Activated naive CD4-positive, alpha-beta T cell treated with anti-CD3 and anti-CD28 coated beads for 36 hours (primary cell): ENCODE measurements at regions of chr5 and their contacts with region 1.

Region 1: GRCh38 chr5:68252673-68253623 is 37.4 kb downstream of the PIK3R1 start:
- DNase-seq: peak; percentile 70
- H3K4me3 Mint-ChIP-seq: no peak overlapping the region
- H3K27ac Mint-ChIP-seq: peak overlapping the region; percentile 47
- H3K4me1 Mint-ChIP-seq: peaks cover 91% of the 10 kb centered on the region
- H3K27me3 Mint-ChIP-seq: no peaks in the 10 kb centered on the region

Region 2: DNA sequence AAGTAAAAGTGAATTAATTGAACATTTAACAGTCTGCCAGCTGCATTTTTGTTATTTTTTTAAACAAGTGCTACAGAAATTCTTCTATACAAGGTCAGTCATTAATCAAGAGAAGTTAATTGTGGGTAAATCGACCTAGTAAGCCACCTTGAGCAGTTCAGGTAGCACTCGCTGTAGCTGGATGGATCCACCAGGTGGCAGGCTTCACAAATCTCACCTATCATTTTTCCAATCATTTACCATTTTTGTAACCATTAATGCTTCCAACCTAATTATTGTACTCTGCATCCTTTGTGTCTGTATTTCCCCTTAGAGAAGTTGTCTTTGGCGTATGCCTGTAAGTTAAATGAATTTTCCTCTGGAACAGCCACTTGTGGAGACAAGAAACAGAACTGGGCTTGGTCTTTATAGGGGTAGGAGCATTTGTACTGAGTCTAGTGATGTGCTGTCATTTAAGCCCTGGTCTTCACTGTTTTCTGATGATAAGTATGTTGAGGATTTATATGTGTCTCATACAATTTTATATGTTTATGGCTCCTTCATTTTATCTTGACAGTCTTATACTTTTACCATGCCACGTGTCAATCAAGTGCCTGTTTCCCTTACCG is 1095.9 kb before region 1 on chr5:
- CTCF ChIA-PET with region 1: no interaction called
- intact Hi-C with region 1: loop called (anchors 2 kb)
- DNase-seq: peak; percentile 70
- H3K4me3 Mint-ChIP-seq: no peak overlapping the region
- H3K27ac Mint-ChIP-seq: no peak overlapping the region
- H3K4me1 Mint-ChIP-seq: peaks cover 35% of the 10 kb centered on the region
- H3K27me3 Mint-ChIP-seq: no peaks in the 10 kb centered on the region

Region 3: DNA sequence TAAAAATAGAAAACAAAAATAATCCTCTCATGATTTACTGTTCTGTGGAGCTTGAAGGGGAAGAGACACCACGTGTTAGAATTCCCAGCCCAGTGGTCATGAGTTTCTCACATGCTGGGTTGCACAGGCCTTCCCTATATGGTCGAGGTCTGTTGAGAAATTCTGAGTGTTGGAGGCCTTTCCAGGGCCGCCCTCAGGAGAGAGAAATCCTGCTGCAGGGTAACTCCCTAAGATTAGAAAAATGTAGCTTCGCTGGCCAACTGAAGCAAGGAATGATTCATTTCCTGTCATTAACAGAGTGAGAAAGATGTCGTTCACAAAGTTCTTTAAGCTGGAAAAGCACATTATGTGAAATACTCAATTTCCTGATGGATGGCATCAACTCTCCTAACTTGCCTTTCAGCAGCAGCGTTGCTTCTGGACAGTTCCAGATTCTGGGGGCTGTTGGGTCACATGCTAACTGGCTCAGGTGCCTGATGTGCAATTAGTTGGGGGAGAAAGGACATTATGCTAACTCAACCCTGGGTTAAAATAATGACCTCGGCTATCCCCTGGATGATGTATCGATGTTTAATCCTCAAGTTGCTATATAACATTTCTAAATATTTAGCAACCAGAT is 951.6 kb before region 1 on chr5:
- CTCF ChIA-PET with region 1: no interaction called
- intact Hi-C with region 1: loop called (anchors 5 kb)
- DNase-seq: no peak
- H3K4me3 Mint-ChIP-seq: no peak overlapping the region
- H3K27ac Mint-ChIP-seq: no peak overlapping the region
- H3K4me1 Mint-ChIP-seq: peaks cover 11% of the 10 kb centered on the region
- H3K27me3 Mint-ChIP-seq: peaks cover 1% of the 10 kb centered on the region

Region 4: DNA sequence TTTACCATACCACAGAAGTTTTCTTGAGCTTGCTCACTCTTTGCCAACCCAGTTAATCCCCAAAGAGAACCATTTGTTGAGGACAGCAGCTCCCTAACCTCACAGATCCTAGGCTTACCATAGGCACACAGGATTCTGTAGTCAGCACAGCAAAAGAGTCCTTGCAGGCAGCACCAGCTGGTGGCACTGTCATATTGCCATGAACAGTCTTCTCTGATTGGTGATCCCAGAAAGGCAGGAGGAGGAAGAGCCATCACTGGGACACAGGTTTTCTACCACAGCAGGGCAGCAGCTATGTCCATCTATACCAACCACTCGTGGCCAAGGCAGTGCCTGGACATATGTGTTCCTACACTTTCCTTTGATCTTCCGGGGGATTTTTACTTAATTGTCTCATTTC is 759.3 kb before region 1 on chr5:
- CTCF ChIA-PET with region 1: no interaction called
- intact Hi-C with region 1: loop called (anchors 1 kb)
- DNase-seq: peak; percentile 38
- H3K4me3 Mint-ChIP-seq: no peak overlapping the region
- H3K27ac Mint-ChIP-seq: no peak overlapping the region
- H3K4me1 Mint-ChIP-seq: no peaks in the 10 kb centered on the region
- H3K27me3 Mint-ChIP-seq: no peaks in the 10 kb centered on the region

Region 5: DNA sequence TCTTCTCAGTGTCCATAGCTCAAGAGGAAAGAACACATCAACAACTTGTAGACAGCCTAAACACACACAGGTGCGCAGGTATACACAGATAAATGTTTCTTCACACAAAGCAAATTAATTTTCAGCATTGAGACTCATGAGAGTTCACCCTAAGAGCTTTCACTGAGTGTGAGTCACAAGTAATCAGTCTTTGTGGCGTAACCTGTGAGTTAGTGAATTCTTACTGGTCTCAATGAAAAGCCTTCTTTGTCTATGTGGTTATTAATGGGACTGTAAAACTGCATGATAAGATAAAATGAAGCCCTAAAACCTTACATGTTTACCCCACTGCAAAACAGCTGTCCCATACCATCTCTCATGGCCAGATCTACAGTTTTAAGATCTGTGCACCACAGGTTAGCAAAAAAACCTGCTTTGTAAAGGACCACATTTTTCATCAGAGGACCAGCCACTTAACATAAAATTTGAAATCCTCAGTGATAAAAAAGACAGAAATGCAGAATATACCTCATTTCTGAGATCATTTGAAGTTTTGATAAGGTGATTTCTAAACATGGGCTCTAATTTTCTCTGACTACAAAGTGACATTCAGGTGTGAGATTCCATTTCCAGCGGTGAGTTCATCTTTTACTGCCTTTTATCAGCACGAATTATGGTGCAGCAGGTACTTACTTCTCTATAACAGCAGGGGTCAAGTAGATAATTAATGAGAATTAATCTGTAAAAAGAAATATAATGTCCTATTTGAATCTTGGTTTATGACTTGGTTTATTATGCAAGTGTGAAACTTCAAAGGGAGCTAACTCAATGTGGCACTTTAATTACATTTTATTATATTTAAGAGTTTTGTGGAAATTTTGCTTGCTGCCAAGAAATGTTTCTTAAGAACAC is 373.1 kb before region 1 on chr5:
- CTCF ChIA-PET with region 1: no interaction called
- intact Hi-C with region 1: no loop called
- DNase-seq: no peak
- H3K4me3 Mint-ChIP-seq: no peak overlapping the region
- H3K27ac Mint-ChIP-seq: no peak overlapping the region
- H3K4me1 Mint-ChIP-seq: no peaks in the 10 kb centered on the region
- H3K27me3 Mint-ChIP-seq: no peaks in the 10 kb centered on the region

Region 6: DNA sequence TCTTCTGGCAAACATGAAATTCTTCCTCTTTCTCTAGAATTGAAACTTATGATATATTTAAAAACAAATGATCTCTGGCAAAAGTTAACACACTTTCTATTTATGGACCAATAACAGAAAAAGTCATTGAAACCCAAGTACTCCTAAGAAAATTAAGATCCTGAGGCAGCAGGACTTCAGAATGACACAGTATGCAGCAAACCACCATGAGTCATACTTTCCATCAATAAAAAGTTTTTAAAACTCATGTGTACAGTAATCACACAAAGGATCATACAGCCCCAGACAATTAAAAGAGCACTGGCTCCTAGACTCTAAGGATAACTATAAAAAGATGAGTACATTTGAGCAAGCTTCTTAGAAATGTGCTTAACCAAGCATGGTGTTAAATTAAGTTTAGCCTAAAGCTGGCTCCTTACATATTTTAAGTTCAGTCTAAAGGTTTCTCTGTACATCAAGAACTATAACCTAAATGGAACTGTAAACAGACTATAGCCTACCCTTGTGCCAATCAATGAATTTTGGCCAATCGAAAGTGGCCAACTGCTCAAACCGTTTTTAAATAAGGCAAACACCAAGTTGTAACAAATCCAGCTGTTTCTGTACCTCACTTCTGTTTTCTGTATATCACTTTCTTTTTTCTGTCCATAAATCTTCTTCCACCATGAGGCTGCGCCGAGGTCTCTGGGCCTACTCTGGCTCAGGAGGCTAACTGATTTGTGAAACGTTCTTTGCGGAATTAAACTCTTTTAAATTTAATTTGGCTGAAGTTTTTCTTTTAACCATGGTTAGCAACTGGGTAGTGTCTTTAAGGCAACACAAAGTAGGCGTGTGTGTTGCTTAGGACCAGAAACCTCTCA is 269.5 kb before region 1 on chr5:
- CTCF ChIA-PET with region 1: no interaction called
- intact Hi-C with region 1: loop called (anchors 10 kb)
- DNase-seq: no peak
- H3K4me3 Mint-ChIP-seq: no peak overlapping the region
- H3K27ac Mint-ChIP-seq: no peak overlapping the region
- H3K4me1 Mint-ChIP-seq: peaks cover 6% of the 10 kb centered on the region
- H3K27me3 Mint-ChIP-seq: no peaks in the 10 kb centered on the region

Region 7: DNA sequence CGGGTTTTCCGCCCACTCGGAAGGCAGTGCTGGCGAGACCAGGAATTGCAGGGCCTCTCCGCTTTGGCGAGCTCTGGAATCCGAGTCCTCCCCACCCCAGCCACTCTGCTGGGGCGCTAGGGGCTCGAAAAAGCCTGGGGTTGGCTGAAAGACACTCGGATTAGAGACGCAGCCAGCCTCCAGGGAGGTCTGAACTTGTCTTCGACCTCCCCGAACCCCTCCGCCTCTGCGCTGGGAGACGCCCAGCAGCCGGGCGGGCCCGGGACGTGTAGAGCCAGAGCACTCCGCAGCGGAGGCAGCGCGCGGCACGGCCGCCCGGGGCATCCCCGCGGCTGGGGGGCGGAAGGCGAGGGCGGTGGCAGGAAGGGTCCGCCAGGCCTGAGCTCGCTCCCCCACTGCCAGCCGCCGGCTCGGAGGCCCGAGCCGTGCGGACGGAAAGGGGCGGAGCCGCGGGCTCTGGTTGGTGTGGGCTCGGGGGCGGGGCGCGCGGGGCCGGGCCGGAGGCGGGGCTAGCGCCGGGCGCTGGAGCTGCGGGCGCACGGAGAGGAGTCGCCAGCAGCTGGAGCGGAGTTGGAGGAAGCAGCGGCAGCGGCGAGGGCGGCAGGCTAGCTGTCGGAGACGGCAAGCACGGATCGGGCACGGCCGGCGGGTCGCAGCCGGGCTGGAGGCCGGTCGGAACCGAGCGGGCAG is 37.6 kb before region 1 on chr5 and contains the start of gene PIK3R1:
- CTCF ChIA-PET with region 1: interaction called, 3 read pairs
- intact Hi-C with region 1: loop called (anchors 1 kb)
- DNase-seq: peak; percentile 93
- H3K4me3 Mint-ChIP-seq: peak within 1 kb of the TSS; percentile 91
- H3K27ac Mint-ChIP-seq: peak within 1 kb of the TSS; percentile 95
- H3K4me1 Mint-ChIP-seq: peaks cover 42% of the 10 kb centered on the region
- H3K27me3 Mint-ChIP-seq: no peaks in the 10 kb centered on the region
- total RNA-seq, gene PIK3R1: 28.5 to 31.4 TPM

Region 8: GRCh38 chr5:68287976-68288706 is 35.2 kb after region 1 on chr5:
- CTCF ChIA-PET with region 1: interaction called, 12 read pairs
- intact Hi-C with region 1: no loop called
- DNase-seq: peak; percentile 58
- H3K4me3 Mint-ChIP-seq: peak overlapping the region; percentile 83
- H3K27ac Mint-ChIP-seq: peak overlapping the region; percentile 81
- H3K4me1 Mint-ChIP-seq: peaks cover 73% of the 10 kb centered on the region
- H3K27me3 Mint-ChIP-seq: no peaks in the 10 kb centered on the region

Region 9: GRCh38 chr5:68315679-68316271 is 62.8 kb after region 1 on chr5:
- CTCF ChIA-PET with region 1: no interaction called
- intact Hi-C with region 1: no loop called
- DNase-seq: peak; percentile 69
- H3K4me3 Mint-ChIP-seq: no peak overlapping the region
- H3K27ac Mint-ChIP-seq: no peak overlapping the region
- H3K4me1 Mint-ChIP-seq: peaks cover 11% of the 10 kb centered on the region
- H3K27me3 Mint-ChIP-seq: peaks cover 2% of the 10 kb centered on the region

Region 10: GRCh38 chr5:68994645-68995044 is 741.7 kb after region 1 on chr5:
- CTCF ChIA-PET with region 1: no interaction called
- intact Hi-C with region 1: no loop called
- DNase-seq: no peak
- H3K4me3 Mint-ChIP-seq: no peak overlapping the region
- H3K27ac Mint-ChIP-seq: no peak overlapping the region
- H3K4me1 Mint-ChIP-seq: no peaks in the 10 kb centered on the region
- H3K27me3 Mint-ChIP-seq: no peaks in the 10 kb centered on the region